Caco-2 (cell line): ENCODE measurements at regions of chr6 and their contacts with region 1.

Region 1: DNA sequence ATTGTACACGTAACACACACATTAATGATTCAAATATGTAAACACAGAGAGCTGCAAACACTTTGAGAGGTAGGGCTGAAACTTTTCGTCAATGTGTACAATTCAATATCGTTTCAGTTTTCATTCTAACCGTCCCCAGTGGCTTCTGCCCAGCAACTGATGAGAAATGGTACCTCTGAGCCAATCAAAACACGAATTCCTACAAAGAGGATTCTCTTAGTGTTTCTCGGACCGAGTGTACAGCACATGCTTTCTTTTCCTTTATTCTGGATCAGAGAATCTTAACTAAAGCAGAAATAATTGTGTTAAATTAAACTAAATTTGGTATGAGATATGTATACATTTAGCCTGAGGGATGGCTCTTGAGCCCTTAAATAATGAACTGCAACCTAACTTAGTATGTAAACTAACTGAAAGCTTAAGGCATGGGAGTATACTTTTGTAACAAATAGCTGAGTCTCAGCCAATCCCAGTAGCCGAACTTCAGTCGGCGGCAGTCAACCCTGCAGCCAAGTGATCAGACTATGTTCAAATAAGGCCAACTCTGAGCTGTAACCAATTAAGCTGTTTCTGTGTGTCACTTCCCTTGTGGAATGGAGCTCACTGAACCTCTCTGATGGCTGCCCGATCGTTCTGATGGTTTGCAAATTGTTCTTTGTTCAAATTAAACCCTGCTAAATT is 16.1 kb downstream of the BTN2A1 start:
- DNase-seq: peak; percentile 63 to 68
- H3K4me3 ChIP-seq: peak overlapping the region; percentile 39
- H3K4me3 Mint-ChIP-seq: peak overlapping the region; percentile 73
- H3K27ac Mint-ChIP-seq: peak overlapping the region; percentile 77
- H3K4me1 ChIP-seq: peaks cover 40% of the 10 kb centered on the region
- H3K4me1 Mint-ChIP-seq: peaks cover 23% of the 10 kb centered on the region
- H3K27me3 ChIP-seq: no peaks in the 10 kb centered on the region
- H3K27me3 Mint-ChIP-seq: no peaks in the 10 kb centered on the region
- CTCF ChIP-seq: no peak

Region 2: DNA sequence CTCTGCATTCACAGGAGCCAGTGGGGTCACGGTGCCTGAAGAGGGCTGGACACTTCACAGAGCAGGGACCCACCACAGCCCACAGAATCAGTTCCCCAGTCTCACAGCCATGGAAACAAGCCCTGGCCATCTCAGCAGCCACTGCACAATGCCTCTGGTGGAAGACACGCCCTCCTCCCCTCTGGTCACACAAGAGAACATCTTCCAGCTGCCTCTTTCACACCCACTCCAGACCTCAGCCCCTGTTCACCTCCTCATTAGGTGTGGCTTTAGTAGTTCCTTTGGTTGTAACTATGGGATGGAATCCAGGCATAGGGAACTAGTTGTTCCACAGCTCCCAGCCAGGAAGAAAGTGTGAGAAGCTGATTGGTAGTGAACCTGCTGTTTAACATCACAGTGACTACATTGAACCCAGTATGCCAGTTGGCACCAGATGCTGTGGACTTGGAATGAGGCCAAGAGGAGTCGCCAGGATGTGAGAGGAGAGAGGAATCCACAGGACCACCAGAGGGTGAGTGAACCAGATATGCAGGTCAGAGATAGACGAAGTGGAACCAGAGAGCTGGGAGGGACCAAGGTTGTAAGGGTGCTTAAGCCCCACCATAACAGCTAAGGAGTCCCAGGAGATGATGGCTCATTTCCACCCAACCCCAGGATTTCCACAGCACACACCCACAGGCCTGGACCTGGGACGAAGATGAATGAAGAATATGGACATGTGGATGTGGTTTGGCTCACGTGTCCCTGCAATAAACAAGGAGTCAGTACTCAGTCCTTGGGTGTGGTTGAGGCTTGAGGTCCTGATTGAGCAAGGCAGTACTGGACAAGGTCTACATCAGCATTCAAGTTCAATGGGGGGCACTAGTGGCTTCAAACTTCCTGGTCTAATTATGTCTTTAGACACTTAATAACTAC is 42.4 kb before region 1 on chr6:
- CTCF ChIA-PET with region 1: no interaction called
- POLR2A ChIA-PET with region 1: no interaction called
- intact Hi-C with region 1: no loop called
- DNase-seq: no peak
- H3K4me3 ChIP-seq: no peak overlapping the region
- H3K4me3 Mint-ChIP-seq: no peak overlapping the region
- H3K27ac Mint-ChIP-seq: no peak overlapping the region
- H3K4me1 ChIP-seq: no peaks in the 10 kb centered on the region
- H3K4me1 Mint-ChIP-seq: no peaks in the 10 kb centered on the region
- H3K27me3 ChIP-seq: no peaks in the 10 kb centered on the region
- H3K27me3 Mint-ChIP-seq: no peaks in the 10 kb centered on the region
- CTCF ChIP-seq: no peak

Region 3: DNA sequence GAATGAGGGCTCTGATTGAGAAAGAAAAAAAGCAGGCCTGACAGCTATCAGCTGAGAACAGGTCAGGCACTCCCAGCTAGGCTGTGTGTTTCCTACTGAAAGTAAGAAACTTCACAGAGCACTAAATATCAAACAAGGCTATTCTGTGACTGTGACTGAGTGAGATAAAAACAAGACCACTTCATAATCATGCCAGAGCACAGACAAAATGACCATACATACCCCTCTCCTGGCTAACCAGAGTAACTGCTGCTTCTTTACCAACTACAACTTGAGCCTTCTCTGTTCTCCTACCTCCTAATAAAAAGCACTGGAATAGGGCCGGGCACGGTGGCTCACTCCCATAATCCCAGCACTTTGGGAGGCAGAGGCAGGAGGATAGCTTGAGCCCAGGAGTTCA is 19.4 kb after region 1 on chr6:
- CTCF ChIA-PET with region 1: no interaction called
- POLR2A ChIA-PET with region 1: interaction called, 5 read pairs
- intact Hi-C with region 1: loop called (anchors 2 kb)
- DNase-seq: peak in 1 of 2 experiments; percentile 18
- H3K4me3 ChIP-seq: no peak overlapping the region
- H3K4me3 Mint-ChIP-seq: no peak overlapping the region
- H3K27ac Mint-ChIP-seq: peak overlapping the region; percentile 66
- H3K4me1 ChIP-seq: peaks cover 55% of the 10 kb centered on the region
- H3K4me1 Mint-ChIP-seq: peaks cover 40% of the 10 kb centered on the region
- H3K27me3 ChIP-seq: no peaks in the 10 kb centered on the region
- H3K27me3 Mint-ChIP-seq: no peaks in the 10 kb centered on the region
- CTCF ChIP-seq: peak in 1 of 2 experiments; percentile 31

Region 4: DNA sequence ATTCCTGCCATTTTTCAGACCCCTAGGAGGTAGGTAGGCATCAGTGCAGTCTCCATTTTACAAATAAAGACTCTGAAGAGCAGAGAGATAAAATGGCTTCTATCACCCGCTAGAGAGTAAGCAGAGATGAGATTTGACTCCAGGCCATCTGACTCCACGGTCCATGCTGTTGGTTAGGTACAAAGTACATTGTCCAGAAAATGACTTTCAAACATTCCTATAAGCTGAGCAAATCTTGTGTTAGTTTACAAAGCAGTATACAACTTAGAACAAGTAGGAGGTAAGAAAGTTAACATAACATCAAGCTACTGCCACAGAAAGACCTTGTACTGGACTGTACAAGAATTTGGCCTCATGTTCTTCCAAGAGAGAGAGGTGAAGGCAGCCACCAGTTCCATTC is 41.1 kb after region 1 on chr6:
- CTCF ChIA-PET with region 1: no interaction called
- POLR2A ChIA-PET with region 1: no interaction called
- intact Hi-C with region 1: loop called (anchors 2 kb)
- DNase-seq: peak; percentile 60 to 64
- H3K4me3 ChIP-seq: no peak overlapping the region
- H3K4me3 Mint-ChIP-seq: peak overlapping the region; percentile 44
- H3K27ac Mint-ChIP-seq: peak overlapping the region; percentile 82
- H3K4me1 ChIP-seq: peaks cover 32% of the 10 kb centered on the region
- H3K4me1 Mint-ChIP-seq: peaks cover 30% of the 10 kb centered on the region
- H3K27me3 ChIP-seq: no peaks in the 10 kb centered on the region
- H3K27me3 Mint-ChIP-seq: no peaks in the 10 kb centered on the region
- CTCF ChIP-seq: no peak